ENCODE measurements at regions of chr4 and their contacts with region 1.

Region 1: GRCh38 chr4:168496834-168497233 is at the start of gene PALLD:
- DNase-seq: peak; percentile 76
- total RNA-seq, gene PALLD: 705 TPM

Region 2: DNA sequence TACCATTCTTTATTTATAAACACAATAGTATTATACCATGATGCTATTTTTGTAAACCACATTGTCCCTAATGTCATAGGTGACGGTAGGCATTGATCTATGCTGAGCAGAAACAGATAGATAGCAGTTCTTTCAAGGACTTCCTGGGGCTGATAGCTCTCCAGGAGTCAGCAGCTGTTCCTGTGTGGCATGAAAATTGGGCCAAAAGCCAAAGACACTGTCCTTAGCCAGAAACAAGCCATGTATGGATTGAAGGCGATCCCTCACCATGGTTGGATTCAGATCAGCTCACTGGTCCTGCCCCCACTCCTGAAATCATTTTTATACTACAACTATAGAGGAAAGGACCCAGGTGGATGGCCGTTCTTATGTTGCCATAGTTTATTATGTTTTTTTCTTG is 231.9 kb before region 1 on chr4:
- intact Hi-C with region 1: loop called (anchors 5 kb)
- DNase-seq: no peak

Region 3: DNA sequence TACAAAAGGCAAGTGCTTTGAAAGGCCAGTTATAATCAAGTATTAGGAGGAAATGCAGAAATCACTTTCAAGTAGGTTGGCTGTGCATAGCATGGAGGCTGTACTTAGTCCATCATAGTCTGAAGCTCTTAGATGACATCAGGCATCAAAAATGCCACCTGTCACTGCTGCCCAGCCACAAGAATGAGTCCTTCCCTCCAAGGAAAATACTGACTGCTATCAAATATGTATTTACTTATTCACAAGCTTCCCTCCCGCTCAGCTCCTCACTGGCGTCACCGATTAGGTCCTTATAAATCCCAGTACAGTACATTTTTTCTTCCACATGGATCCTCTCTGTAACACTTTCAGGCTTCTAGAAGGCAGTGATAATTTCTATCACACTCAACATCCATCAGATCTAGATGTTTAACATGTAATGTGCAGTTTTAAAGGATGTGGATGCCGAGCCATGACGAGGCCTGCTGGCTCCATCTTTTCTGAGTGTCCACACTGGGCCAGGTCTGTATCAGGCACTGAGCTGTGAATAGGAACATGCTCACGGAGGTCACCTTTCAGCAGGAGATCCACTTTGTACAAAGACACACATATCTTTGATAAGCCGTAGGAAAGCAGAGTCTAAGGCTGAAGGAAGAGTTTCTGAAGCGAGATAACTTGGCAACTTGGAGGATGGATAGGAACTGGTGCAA is 121.9 kb after region 1 on chr4:
- intact Hi-C with region 1: loop called (anchors 5 kb)
- DNase-seq: no peak